Mucosa of descending colon (tissue), 3 donors: ENCODE measurements at regions of chr6 and their contacts with region 1.

Region 1: DNA sequence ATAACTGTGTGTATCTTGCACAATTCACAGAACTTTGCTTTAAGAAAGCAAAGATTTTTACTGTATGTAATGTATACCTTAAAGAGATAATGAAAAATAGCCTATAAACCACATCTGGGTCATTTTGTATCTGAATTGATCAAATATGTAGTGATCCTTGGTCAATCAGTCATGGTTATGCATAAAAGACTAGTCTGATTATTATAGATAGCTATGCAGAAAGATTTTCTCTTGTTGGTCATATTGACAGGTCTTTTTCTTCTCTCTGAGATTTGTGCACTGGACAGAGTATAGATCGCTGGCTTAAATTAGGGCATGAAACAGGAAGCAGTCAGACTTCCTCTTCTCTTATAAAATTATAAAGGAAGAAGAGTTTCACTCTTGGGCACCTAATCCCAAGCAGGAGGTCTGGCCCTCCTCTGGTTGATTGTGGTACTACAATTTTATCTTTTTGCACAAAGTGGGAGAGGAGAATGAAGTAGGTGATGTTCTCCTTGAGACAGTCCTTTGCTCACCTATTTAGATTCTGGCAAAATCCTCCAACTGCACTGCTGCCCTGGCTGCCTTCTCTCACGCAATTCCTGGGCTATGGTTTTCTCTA is 380.9 kb upstream of the RGS17 start:
- DNase-seq: peak in 1 of 3 donors; percentile 23
- ATAC-seq: peak; percentile 55
- H3K4me3 ChIP-seq: no peak overlapping the region
- H3K4me1 ChIP-seq: no peaks in the 10 kb centered on the region
- CTCF ChIP-seq: peak; percentile 13

Region 2: GRCh38 chr6:153032255-153032882 is 479.6 kb before region 1 on chr6:
- intact Hi-C with region 1: loop called in 1 of 2 experiments (anchors 10 kb)
- DNase-seq: no peak
- ATAC-seq: no peak
- H3K4me3 ChIP-seq: no peak overlapping the region
- H3K4me1 ChIP-seq: peaks cover 10% of the 10 kb centered on the region
- CTCF ChIP-seq: no peak